ENCODE measurements at regions of chr18 and their contacts with region 1.

Region 1: DNA sequence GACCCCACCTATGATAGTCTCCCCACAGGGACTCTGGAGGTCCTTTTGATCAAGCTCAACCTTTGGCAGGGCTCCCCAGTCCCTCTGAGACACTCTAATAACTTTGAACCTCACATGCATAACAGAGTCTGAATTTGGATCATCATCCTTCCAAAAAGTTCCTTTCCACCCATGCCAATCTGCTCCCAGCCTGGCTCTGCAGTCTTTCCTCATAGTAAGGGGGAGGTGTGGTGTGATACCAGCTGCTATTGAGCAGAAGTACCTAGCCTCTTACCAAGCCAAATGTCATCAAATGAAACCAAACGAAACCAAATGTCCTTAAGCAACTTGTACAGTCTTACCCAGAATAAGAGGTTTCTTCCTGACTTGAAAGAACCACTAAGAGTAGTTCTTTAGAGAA is 36.5 kb downstream of the DTNA start:
- DNase-seq: no peak
- H3K4me3 ChIP-seq: no peak overlapping the region
- H3K27ac ChIP-seq: no peak overlapping the region
- H3K4me1 ChIP-seq: no peaks in the 10 kb centered on the region
- H3K27me3 ChIP-seq: no peaks in the 10 kb centered on the region
- CTCF ChIP-seq: no peak
- POLR2A ChIP-seq: no peak

Region 2: GRCh38 chr18:33749834-33750233 is 996.8 kb before region 1 on chr18:
- intact Hi-C with region 1: loop called (anchors 5 kb)
- DNase-seq: no peak
- H3K4me3 ChIP-seq: no peak overlapping the region
- H3K27ac ChIP-seq: no peak overlapping the region
- H3K4me1 ChIP-seq: no peaks in the 10 kb centered on the region
- H3K27me3 ChIP-seq: no peaks in the 10 kb centered on the region
- CTCF ChIP-seq: no peak
- POLR2A ChIP-seq: no peak

Region 3: DNA sequence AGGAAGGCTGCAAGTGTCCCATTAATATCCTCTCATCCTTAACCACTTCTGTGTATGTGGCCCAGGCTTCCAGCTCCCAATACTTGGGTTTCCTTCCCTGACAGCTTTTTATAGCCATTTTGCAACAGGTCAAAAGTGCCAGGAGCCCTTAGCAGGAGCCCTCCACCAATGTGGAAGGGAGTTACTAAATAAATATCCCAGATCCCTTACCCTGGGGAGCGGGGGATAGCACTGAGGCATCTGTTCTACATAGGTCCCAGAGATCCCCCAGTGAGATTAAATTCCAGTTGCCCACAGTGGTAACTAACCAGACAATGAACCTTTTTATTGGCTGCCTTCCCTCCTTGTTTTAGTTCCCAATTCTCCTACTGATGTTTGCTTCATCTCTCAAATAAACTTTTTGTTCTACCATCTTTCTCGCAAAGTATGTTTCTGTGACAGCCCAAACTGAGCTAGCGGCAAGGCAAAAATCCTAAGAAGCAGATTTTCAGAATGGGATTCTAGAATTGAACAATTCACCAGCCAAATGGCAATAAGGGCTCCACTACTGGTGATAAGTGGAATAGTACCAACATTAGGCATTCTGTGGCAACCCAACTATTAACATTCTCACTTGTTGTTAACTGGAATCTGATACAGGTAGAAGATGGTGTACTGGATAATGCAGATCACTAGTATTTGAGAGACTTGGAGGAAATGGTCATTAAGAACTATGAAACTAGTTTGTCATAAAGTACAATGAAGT is 210.7 kb after region 1 on chr18:
- intact Hi-C with region 1: no loop called
- DNase-seq: no peak
- H3K4me3 ChIP-seq: no peak overlapping the region
- H3K27ac ChIP-seq: peak overlapping the region in 1 of 2 donors; percentile 60
- H3K4me1 ChIP-seq: no peaks in the 10 kb centered on the region
- H3K27me3 ChIP-seq: no peaks in the 10 kb centered on the region
- CTCF ChIP-seq: no peak
- POLR2A ChIP-seq: no peak

Measured in breast epithelium (tissue), 4 donors.